Endothelial cell of umbilical vein (primary cell): ENCODE measurements at regions of chr13 and their contacts with region 1.

Region 1: DNA sequence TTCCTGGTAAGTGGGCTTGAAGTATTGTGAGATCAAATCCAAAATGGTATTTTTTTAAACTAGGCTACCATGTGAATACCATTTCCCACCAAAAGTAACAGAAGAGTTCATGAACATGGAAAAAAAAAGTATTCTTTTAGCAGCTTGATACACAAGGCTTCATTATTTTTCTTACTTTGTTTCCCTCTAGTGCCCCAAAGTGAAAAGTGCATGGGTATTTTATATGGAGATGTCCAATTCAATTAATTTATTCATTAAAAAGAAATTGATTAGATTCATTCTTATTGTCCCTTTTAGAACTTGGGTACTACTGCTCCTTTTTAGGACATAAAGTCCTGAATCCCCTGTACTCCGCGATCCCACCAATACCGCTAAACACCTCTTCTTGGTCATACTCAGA is 28.6 kb upstream of the SCEL start:
- DNase-seq: peak; percentile 58
- H3K4me3 ChIP-seq: no peak overlapping the region
- H3K27ac ChIP-seq: no peak overlapping the region
- H3K4me1 ChIP-seq: peaks cover 29% of the 10 kb centered on the region
- H3K27me3 ChIP-seq: peaks cover 4 to 5% of the 10 kb centered on the region in 2 experiments
- CTCF ChIP-seq: peak; percentile 3 to 17
- POLR2A ChIP-seq: no peak

Region 2: DNA sequence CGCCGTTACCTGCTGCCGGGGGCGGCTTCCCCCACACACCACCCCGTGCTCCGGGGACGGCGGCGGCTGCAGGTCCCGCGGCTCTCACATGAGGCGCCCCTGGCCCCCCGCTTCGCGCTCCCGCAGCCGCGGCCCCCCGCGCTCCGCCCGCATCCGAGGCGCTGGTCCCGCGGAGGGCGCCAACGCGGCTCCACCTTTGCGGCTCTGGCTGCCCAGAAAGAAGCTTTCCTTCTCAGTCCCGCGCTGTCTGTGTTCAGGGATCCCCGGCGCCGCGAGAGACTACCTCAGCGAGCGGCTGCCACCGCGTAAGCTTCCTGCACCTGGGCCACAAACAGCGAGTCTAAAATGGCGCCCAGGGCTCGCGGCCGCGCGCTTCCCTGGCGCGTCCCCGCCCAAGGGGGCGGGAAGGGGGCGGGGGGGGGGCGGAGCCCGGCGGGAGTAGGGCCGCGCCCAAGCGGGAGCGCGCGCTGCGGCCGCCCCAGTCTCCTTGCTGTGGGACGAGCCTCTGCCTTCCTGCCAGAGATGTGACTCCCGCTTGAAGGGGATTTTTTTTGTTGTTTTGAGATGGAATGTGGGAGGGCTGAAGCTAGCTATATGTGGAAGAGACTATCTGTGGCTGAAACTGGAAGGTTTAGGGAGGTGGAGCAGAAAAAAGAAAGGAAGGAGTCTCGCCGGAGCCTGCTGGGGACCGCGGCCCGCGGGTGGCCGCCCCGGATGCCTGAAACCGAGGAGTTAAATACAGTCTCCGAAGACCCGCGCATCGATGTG is 479.9 kb before region 1 on chr13 and contains the start of gene FBXL3:
- CTCF ChIA-PET with region 1: no interaction called
- POLR2A ChIA-PET with region 1: no interaction called
- dilution Hi-C with region 1: no loop called
- intact Hi-C with region 1: loop called (anchors 1 kb)
- DNase-seq: peak; percentile 73
- H3K4me3 ChIP-seq: peak within 1 kb of the TSS; percentile 79 to 94 (median 80)
- H3K27ac ChIP-seq: peak within 1 kb of the TSS; percentile 87
- H3K4me1 ChIP-seq: peaks cover 33% of the 10 kb centered on the region
- H3K27me3 ChIP-seq: no peaks in the 10 kb centered on the region
- CTCF ChIP-seq: no peak
- POLR2A ChIP-seq: no peak
- total RNA-seq, gene FBXL3: 35.9 and 37.8 TPM in 2 replicates

Region 3: GRCh38 chr13:77300176-77301037 is 206.5 kb before region 1 on chr13:
- CTCF ChIA-PET with region 1: no interaction called
- POLR2A ChIA-PET with region 1: no interaction called
- dilution Hi-C with region 1: no loop called
- intact Hi-C with region 1: no loop called
- DNase-seq: peak; percentile 75
- H3K4me3 ChIP-seq: no peak overlapping the region
- H3K27ac ChIP-seq: peak overlapping the region; percentile 52
- H3K4me1 ChIP-seq: peaks cover 26% of the 10 kb centered on the region
- H3K27me3 ChIP-seq: no peaks in the 10 kb centered on the region
- CTCF ChIP-seq: no peak
- POLR2A ChIP-seq: no peak

Region 4: DNA sequence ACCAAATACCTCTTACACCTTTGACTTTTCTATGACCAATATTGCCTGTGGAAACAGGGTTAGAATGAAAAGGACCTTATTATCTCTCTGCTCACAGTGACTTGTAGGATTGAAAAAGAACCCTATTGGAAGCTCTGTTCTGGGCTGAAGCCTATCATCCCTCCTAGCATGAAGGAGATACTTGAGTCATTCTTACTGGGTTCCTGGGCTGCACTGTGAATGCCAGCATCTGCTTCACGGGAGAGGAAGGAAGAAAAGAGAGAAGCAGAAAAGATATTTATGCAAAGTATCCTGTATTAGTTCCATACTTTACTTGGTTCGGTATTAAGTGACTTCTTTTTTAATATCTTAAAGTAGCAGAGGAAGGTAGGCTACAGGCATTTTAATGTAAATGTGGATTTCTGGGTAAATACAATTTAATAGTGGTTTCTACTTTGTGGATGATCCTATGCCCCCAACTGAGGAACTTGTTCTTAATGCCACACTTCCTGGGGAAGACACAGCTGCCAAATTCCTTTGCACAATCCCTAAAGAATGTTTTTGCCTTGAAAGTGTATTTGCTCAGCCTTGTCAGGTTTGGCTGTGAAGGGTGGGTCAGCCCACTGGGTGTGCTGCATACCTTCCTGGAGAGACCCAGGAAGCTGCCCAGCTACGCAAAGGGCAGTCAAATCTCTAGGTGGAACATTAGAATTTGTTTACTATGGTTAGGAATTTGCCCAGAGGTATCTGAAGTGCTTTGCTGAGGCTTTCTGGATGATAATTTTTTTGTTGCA is 14.9 kb after region 1 on chr13:
- CTCF ChIA-PET with region 1: interaction called, 7 read pairs
- POLR2A ChIA-PET with region 1: no interaction called
- dilution Hi-C with region 1: no loop called
- intact Hi-C with region 1: loop called (anchors 1 kb)
- DNase-seq: peak; percentile 58
- H3K4me3 ChIP-seq: no peak overlapping the region
- H3K27ac ChIP-seq: peak overlapping the region; percentile 59
- H3K4me1 ChIP-seq: peaks cover 39% of the 10 kb centered on the region
- H3K27me3 ChIP-seq: no peaks in the 10 kb centered on the region
- CTCF ChIP-seq: no peak
- POLR2A ChIP-seq: no peak

Region 5: GRCh38 chr13:77565635-77566034 is 58.8 kb after region 1 on chr13:
- CTCF ChIA-PET with region 1: interaction called, 4 read pairs
- POLR2A ChIA-PET with region 1: no interaction called
- dilution Hi-C with region 1: no loop called
- intact Hi-C with region 1: loop called (anchors 1 kb)
- DNase-seq: peak; percentile 71
- H3K4me3 ChIP-seq: no peak overlapping the region
- H3K27ac ChIP-seq: no peak overlapping the region
- H3K4me1 ChIP-seq: no peaks in the 10 kb centered on the region
- H3K27me3 ChIP-seq: peaks cover 5 to 8% of the 10 kb centered on the region in 2 experiments
- CTCF ChIP-seq: peak; percentile 28 to 33
- POLR2A ChIP-seq: no peak

Region 6: DNA sequence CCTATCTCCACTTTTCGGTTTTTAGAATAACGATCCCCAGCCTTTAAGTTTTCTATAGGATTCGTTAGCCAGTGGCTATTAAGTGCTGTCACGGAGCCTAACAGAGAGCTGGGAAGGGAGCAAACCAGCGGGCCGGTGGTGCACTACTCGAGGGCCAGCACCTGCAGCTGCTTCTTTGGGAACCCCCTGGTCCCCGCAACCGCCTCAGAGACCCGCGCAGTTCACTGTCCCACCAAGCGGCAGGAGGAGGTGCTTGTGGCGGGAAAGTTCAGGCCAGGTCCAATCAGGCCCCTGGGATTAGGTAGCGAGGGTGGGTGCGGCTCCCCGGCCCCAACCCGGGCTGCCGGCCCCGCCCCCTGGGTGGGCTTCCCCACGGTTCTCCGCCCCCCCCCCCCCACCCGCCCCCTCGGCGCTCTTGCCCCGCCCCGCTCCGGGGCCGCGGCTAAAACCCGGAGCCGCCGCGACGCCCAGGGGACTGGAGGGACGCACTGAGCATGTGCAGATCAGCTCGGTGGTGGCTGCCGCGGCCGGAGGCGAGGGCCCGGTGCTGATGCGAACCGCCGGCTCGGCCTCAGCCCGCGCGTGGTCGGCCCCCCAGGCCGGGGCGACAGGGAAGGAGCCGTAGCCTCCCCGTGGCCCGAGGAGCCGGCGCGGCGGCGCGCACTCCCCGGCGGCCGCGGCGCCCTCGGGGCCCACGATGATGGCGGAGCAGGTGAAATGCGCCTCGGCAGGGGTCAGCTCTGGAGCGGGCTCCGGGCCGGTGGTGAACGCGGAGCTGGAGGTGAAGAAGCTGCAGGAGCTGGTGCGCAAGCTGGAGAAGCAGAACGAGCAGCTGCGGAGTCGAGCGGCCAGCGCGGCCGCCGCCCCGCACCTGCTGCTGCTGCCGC is 190.6 kb after region 1 on chr13 and contains the start of gene SLAIN1:
- CTCF ChIA-PET with region 1: no interaction called
- POLR2A ChIA-PET with region 1: no interaction called
- dilution Hi-C with region 1: no loop called
- intact Hi-C with region 1: loop called (anchors 5 kb)
- DNase-seq: peak; percentile 61
- H3K4me3 ChIP-seq: peak within 1 kb of the TSS; percentile 65 to 87 (median 75)
- H3K27ac ChIP-seq: no peak within 1 kb of the TSS
- H3K4me1 ChIP-seq: no peaks in the 10 kb centered on the region
- H3K27me3 ChIP-seq: peaks cover 7 to 26% of the 10 kb centered on the region in 2 experiments
- CTCF ChIP-seq: no peak
- POLR2A ChIP-seq: no peak
- total RNA-seq, gene SLAIN1: 4.3 and 4.5 TPM in 2 replicates

Region 7: GRCh38 chr13:77751513-77752456 is 244.9 kb after region 1 on chr13:
- CTCF ChIA-PET with region 1: no interaction called
- POLR2A ChIA-PET with region 1: no interaction called
- dilution Hi-C with region 1: no loop called
- intact Hi-C with region 1: loop called (anchors 5 kb)
- DNase-seq: peak; percentile 76
- H3K4me3 ChIP-seq: no peak overlapping the region
- H3K27ac ChIP-seq: no peak overlapping the region
- H3K4me1 ChIP-seq: peaks cover 3% of the 10 kb centered on the region
- H3K27me3 ChIP-seq: no peaks in the 10 kb centered on the region
- CTCF ChIP-seq: peak; percentile 59 to 65
- POLR2A ChIP-seq: no peak